ENCODE measurements at regions of chr10 and their contacts with region 1.

Region 1: DNA sequence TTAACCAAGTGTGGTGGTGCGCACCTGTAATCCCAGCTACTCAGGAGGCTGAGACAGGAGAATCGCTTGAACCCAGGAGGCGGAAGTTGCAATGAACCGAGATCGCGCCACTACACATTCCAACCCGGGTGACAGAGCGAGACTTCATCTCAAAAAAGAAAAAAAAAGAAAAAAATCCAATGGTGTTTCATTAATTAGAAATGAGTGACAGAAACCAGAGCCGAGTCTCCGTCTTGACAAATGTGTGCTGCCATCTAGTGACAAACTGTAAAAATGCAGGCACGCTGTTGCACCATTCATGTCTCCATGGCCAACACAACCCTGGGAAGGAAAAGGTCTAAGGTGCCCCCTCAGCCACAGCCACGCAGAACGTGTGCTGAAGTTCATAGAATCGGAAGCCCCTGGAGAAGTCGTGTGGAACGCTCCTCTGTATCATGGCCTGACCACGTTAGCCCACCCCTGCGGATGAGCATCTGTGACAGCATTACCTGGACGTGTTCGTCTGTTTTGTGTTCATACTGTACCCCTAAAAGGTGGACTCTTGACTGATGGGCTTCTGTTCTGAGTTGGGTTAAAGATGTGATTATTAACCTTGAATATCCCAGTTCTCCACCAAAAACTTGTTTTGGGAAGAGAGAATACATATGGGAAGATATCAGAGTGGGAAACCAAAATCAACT is 94.9 kb downstream of the LYZL2 start:
- DNase-seq: peak; percentile 86
- H3K4me3 ChIP-seq: no peak overlapping the region
- H3K27ac ChIP-seq: no peak overlapping the region
- H3K4me1 ChIP-seq: peaks cover 0 to 14% (median 0%) of the 10 kb centered on the region in 4 donors
- H3K27me3 ChIP-seq: no peaks in the 10 kb centered on the region
- CTCF ChIP-seq: peak; percentile 83 to 92 (median 90)
- EP300 ChIP-seq: no peak
- POLR2A ChIP-seq: no peak

Region 2: GRCh38 chr10:30392564-30392990 is 142.0 kb before region 1 on chr10:
- intact Hi-C with region 1: loop called (anchors 1 kb)
- DNase-seq: peak; percentile 86
- H3K4me3 ChIP-seq: peak overlapping the region in 2 of 4 donors; percentile 15 to 28
- H3K27ac ChIP-seq: no peak overlapping the region
- H3K4me1 ChIP-seq: peaks cover 0 to 7% (median 2%) of the 10 kb centered on the region in 4 donors
- H3K27me3 ChIP-seq: no peaks in the 10 kb centered on the region
- CTCF ChIP-seq: peak; percentile 86 to 95 (median 90)
- EP300 ChIP-seq: no peak
- POLR2A ChIP-seq: no peak

Region 3: GRCh38 chr10:30413996-30414576 is 120.5 kb before region 1 on chr10:
- intact Hi-C with region 1: loop called (anchors 1 kb)
- DNase-seq: no peak
- H3K4me3 ChIP-seq: no peak overlapping the region
- H3K27ac ChIP-seq: no peak overlapping the region
- H3K4me1 ChIP-seq: no peaks in the 10 kb centered on the region
- H3K27me3 ChIP-seq: no peaks in the 10 kb centered on the region
- CTCF ChIP-seq: peak; percentile 66 to 85 (median 76)
- EP300 ChIP-seq: no peak
- POLR2A ChIP-seq: no peak

Region 4: GRCh38 chr10:30591249-30591670 is 56.7 kb after region 1 on chr10:
- intact Hi-C with region 1: loop called (anchors 5 kb)
- DNase-seq: no peak
- H3K4me3 ChIP-seq: no peak overlapping the region
- H3K27ac ChIP-seq: no peak overlapping the region
- H3K4me1 ChIP-seq: no peaks in the 10 kb centered on the region
- H3K27me3 ChIP-seq: no peaks in the 10 kb centered on the region
- CTCF ChIP-seq: peak; percentile 52 to 82 (median 80)
- EP300 ChIP-seq: no peak
- POLR2A ChIP-seq: no peak

Measured in sigmoid colon (tissue), 7 donors.